PC-9 (cell line): ENCODE measurements at regions of chr6 and their contacts with region 1.

Region 1: DNA sequence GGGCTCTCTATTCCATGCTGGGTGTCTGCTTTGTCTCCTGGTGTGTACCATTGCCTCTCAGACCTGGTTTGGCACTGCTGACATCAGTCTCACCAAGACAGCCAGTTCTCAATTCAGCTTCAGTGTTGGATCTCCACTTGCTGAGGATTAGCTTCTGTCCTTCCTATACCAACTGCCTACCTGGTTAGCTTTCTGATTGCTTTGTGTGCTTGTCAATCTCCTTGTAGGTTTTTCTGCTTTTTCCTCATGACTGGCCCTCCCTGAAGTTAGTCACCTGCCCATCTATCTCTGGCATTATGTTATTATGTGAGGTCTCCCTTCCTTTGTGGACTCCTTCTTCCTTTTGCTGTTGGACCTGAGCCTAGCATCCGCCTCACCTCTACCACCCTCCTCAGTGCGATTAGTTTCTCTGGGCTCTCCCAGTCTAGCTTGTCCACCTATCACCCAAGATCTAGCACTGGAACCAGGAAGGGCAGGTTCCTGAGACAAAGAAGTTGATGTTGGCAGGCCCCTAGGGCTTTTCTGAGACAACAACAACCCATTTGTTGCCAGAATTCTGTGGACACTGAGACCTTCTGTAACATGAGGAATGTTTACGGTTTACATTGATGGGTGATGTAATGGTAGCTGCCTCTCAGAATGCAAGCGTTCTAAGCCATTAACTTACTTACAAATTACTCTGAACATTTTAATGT is 3.4 kb upstream of the MED23 start:
- DNase-seq: peak; percentile 35 to 68
- H3K4me3 ChIP-seq: no peak overlapping the region
- H3K27ac ChIP-seq: no peak overlapping the region
- H3K4me1 ChIP-seq: peaks cover 25% of the 10 kb centered on the region
- H3K27me3 ChIP-seq: no peaks in the 10 kb centered on the region
- CTCF ChIP-seq: no peak

Region 2: GRCh38 chr6:131660195-131660594 is 28.8 kb after region 1 on chr6:
- CTCF ChIA-PET with region 1: no interaction called
- POLR2A ChIA-PET with region 1: no interaction called
- intact Hi-C with region 1: loop called (anchors 1 kb)
- DNase-seq: peak; percentile 18 to 75
- H3K4me3 ChIP-seq: no peak overlapping the region
- H3K27ac ChIP-seq: no peak overlapping the region
- H3K4me1 ChIP-seq: peaks cover 21% of the 10 kb centered on the region; the same call in 1 of the 2 replicates
- H3K27me3 ChIP-seq: no peaks in the 10 kb centered on the region
- CTCF ChIP-seq: no peak